Activated T-helper 2 cell treated with anti-CD3 and anti-CD28 coated beads, Interferon-gamma antibody, Interleukin-2, Interleukin-4, amounts not matched to agents 10 μg/mL and 5 μg/mL and 100 μg/mL, durations not matched to agents 14 hours and 24 hours and 36 hours (primary cell): ENCODE measurements at regions of chr4 and their contacts with region 1.

Region 1: GRCh38 chr4:22614114-22614513 is 78.6 kb upstream of the GBA3 start:
- DNase-seq: no peak
- H3K4me3 Mint-ChIP-seq: no peak overlapping the region
- H3K27ac Mint-ChIP-seq: no peak overlapping the region
- H3K4me1 Mint-ChIP-seq: peaks cover 16% of the 10 kb centered on the region
- H3K27me3 Mint-ChIP-seq: peaks cover 4% of the 10 kb centered on the region

Region 2: DNA sequence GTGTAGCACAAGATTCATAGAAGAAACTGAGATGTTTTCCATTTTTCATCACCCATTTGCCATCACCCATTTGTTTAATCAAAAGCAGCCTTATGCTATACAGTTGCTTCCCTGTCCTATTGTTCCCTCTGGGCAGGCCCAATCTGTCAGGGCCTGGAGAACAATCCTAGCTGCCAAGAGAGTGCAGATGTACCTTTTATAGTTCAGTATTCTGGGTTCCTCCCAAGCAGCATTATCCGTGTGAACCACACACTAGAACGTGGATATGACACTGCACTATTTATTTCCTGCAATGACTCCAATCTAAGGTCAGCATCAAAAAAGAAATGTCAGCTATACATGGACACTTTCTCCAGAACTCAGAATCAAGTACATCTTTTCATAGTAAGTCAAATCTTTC is 367.3 kb before region 1 on chr4:
- intact Hi-C with region 1: loop called (anchors 10 kb)
- DNase-seq: no peak
- H3K4me3 Mint-ChIP-seq: no peak overlapping the region
- H3K27ac Mint-ChIP-seq: no peak overlapping the region
- H3K4me1 Mint-ChIP-seq: peaks cover 15% of the 10 kb centered on the region
- H3K27me3 Mint-ChIP-seq: no peaks in the 10 kb centered on the region

Region 3: DNA sequence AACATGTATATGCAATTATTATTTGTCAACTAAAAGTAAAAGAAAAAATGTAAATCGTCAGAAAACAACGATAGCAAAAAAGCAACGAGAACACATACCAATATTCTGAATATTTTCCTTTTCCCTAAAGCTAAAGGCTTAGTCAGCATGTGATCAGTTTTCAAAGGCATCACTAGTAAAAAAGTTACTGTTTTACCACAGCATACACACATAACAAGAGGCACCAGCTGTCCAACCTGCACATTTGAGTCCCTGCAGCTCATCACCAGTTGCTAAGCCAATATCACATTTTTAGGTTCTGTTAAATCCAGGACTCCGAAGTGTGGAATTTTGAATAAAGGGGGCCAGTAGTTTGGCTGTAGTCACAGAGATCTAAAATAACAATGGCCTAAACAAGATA is 302.0 kb before region 1 on chr4:
- intact Hi-C with region 1: no loop called
- DNase-seq: no peak
- H3K4me3 Mint-ChIP-seq: no peak overlapping the region
- H3K27ac Mint-ChIP-seq: no peak overlapping the region
- H3K4me1 Mint-ChIP-seq: peaks cover 7% of the 10 kb centered on the region
- H3K27me3 Mint-ChIP-seq: no peaks in the 10 kb centered on the region

Region 4: DNA sequence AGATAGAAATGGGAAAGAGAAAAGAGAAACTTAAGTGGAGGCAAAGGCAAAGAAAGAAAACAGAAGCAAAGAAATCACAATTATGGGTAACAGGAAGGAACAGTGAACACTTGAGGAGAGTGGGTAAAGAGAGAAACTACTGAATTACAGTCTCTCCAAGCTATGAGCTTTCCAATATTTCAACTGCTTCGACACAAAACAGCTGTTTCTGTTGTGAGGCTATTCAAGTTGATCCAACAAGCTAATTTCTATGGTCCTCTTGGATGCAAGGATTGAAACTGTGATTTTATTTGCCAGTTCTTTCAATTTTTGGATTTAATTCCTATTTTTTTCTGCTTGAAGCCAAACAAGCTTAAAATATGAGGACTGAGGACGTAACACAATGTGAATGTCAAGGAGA is 17.7 kb before region 1 on chr4:
- intact Hi-C with region 1: no loop called
- DNase-seq: no peak
- H3K4me3 Mint-ChIP-seq: no peak overlapping the region
- H3K27ac Mint-ChIP-seq: peak overlapping the region; percentile 59
- H3K4me1 Mint-ChIP-seq: peaks cover 18% of the 10 kb centered on the region
- H3K27me3 Mint-ChIP-seq: no peaks in the 10 kb centered on the region